WTC11 (cell line): ENCODE measurements at regions of chr11 and their contacts with region 1.

Region 1: DNA sequence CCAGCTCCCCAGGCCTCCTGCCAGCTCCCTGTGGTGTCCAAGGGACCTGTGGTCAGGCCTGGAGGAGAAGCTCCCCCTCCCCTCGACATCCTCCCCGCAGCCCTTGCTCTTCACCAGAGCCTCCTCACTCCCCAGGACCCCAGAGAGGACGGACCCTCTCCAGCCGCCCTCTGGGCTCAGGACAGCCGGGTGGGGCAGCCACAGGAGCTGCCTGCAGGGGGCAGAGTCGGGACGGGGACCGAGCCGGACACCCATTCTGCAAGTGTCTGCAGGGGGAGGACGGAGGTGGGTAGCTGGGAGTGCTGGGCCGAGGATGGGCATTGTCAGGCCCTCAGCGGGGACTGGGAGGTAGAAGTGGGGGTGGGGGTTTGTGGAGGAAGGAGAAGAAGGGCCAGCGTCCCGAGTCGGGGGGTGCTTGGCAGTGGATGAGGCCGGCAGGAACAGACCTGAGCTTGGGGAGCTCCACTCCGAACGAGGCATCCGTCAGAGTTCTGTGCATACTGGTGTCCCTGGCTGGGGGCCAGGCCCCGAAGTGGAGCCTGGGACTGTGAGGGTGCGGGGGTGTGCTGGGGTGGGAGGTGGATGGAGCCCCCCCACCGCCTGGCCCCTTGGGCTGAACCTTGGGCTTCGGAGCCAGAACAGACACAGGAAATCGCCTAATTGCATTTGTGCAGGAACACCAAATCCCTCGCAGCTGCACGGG is 15.2 kb downstream of the PRR33 start:
- DNase-seq: peak; percentile 77
- ATAC-seq: peak; percentile 85
- H3K4me3 Mint-ChIP-seq: no peak overlapping the region
- H3K27ac Mint-ChIP-seq: no peak overlapping the region
- H3K4me1 Mint-ChIP-seq: 0 out of 2 replicates have a peak, but pooled peaks cover 3% of the 10 kb centered on the region
- H3K27me3 Mint-ChIP-seq: no peaks in the 10 kb centered on the region; the same call in 1 of the 2 replicates
- CTCF ChIP-seq: peak; percentile 21; the same call in 1 of the 2 replicates

Region 2: GRCh38 chr11:1837171-1838076 is 39.1 kb before region 1 on chr11:
- CTCF ChIA-PET with region 1: interaction called, 27 read pairs
- POLR2A ChIA-PET with region 1: no interaction called
- DNase-seq: peak; percentile 88
- ATAC-seq: peak; percentile 84
- H3K4me3 Mint-ChIP-seq: no peak overlapping the region
- H3K27ac Mint-ChIP-seq: no peak overlapping the region
- H3K4me1 Mint-ChIP-seq: no peaks in the 10 kb centered on the region
- H3K27me3 Mint-ChIP-seq: peaks cover 5% of the 10 kb centered on the region
- CTCF ChIP-seq: peak; percentile 57

Region 3: DNA sequence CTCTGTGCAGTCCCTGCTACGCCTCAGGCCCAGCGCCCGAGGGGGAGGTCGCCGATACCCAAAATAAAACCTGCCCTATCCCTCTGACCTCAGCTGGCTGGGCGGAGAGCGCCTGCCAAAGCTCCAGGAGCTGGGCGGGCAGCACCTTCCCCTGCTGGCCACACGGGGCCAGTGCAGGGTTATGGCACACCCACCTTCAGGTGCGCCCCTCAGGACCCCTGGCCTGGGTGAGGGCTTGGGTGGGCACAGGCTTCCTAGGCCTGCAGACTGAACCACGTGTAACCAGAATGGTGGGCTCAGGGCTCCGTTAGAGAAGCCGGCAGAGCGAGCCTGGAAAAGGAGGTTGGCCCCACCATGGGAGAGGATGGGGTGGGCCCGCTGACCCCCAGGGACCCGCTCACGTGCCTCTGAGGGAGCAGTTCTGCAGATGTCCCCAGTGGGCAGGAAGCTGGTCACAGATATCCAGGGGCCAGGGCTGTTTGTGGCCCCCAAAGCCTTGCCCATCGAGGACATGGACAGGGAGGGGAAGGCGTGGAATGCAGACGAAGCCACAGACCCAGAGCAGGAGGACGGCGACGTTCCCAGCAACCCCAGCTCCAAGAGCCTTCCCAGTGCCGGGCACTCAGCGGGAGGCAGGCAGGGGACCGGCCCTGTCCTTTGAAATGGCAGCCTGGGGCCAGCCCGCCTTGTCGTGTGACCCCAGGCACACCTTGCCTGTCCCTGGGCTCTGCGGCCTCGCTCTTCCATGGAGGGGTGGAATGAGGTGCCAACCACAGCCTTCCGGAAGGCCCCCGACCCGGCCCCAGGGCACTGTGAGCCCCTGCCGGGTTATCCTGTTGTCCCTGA is 41.4 kb after region 1 on chr11:
- CTCF ChIA-PET with region 1: interaction called, 27 read pairs
- POLR2A ChIA-PET with region 1: no interaction called
- DNase-seq: peak; percentile 49
- ATAC-seq: peak; percentile 86
- H3K4me3 Mint-ChIP-seq: no peak overlapping the region
- H3K27ac Mint-ChIP-seq: no peak overlapping the region
- H3K4me1 Mint-ChIP-seq: no peaks in the 10 kb centered on the region
- H3K27me3 Mint-ChIP-seq: no peaks in the 10 kb centered on the region; the same call in 1 of the 2 replicates
- CTCF ChIP-seq: peak; percentile 55; the same call in 1 of the 2 replicates

Region 4: DNA sequence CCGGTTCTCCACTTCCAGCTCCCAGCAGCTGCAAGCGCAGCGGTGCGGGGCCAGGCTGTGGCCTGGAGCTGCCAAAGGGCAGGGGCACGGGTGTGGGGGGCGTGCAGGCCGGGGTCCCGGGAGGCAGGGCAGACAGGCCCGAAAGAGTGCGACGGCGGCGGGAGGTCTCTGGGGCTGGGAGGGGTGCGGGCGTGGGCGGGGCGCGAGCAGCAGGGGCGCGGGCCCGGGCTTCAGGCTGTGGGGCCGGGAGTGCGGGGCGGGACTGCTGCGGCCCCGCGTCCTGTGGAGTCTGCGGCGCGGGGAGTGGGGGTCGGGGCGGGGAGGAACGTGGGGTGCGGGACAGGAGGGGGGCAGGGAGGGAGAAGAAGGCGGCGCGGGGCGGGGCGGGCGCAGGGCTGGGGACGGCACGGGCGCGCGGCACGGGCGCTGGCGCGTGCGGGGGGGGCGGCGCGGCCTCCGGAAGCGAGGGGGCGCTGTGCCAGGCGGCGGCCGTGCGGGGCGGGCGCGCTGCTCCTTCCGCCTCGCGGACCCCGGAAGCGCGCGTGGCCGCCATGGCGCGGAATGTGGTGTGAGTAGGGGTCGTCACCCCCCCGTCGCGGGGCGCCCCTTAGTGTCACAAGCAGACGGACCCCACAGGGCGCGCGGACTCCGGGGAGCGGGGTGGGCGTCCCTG is 70.4 kb after region 1 on chr11 and contains the start of gene MRPL23:
- CTCF ChIA-PET with region 1: interaction called, 62 read pairs
- POLR2A ChIA-PET with region 1: no interaction called
- DNase-seq: no peak
- ATAC-seq: peak; percentile 27
- H3K4me3 Mint-ChIP-seq: no peak within 1 kb of the TSS
- H3K27ac Mint-ChIP-seq: no peak within 1 kb of the TSS
- H3K4me1 Mint-ChIP-seq: peaks cover 3% of the 10 kb centered on the region
- H3K27me3 Mint-ChIP-seq: no peaks in the 10 kb centered on the region
- CTCF ChIP-seq: no peak
- total RNA-seq, gene MRPL23: 59.4 to 73.0 TPM (median 61.0 TPM) in 3 replicates

Region 5: GRCh38 chr11:2002807-2003206 is 126.3 kb after region 1 on chr11:
- CTCF ChIA-PET with region 1: interaction called, 65 read pairs
- POLR2A ChIA-PET with region 1: no interaction called
- DNase-seq: no peak
- ATAC-seq: no peak
- H3K4me3 Mint-ChIP-seq: no peak overlapping the region
- H3K27ac Mint-ChIP-seq: no peak overlapping the region
- H3K4me1 Mint-ChIP-seq: no peaks in the 10 kb centered on the region
- H3K27me3 Mint-ChIP-seq: no peaks in the 10 kb centered on the region
- CTCF ChIP-seq: no peak